Sigmoid colon (tissue), 7 donors: ENCODE measurements at regions of chr16 and their contacts with region 1.

Region 1: GRCh38 chr16:15553313-15554088 is 89.5 kb downstream of the MARF1 start:
- DNase-seq: no peak
- H3K4me3 ChIP-seq: no peak overlapping the region
- H3K27ac ChIP-seq: no peak overlapping the region
- H3K4me1 ChIP-seq: peaks cover 0 to 10% (median 0%) of the 10 kb centered on the region in 4 donors
- H3K27me3 ChIP-seq: no peaks in the 10 kb centered on the region
- CTCF ChIP-seq: no peak
- EP300 ChIP-seq: no peak
- POLR2A ChIP-seq: no peak

Region 2: GRCh38 chr16:15427648-15428239 is 125.8 kb before region 1 on chr16:
- intact Hi-C with region 1: loop called (anchors 5 kb)
- DNase-seq: peak; percentile 83
- H3K4me3 ChIP-seq: peak overlapping the region in 1 of 4 donors; percentile 20
- H3K27ac ChIP-seq: peak overlapping the region; percentile 42 to 66 (median 55)
- H3K4me1 ChIP-seq: peaks cover 0 to 12% (median 11%) of the 10 kb centered on the region in 4 donors
- H3K27me3 ChIP-seq: no peaks in the 10 kb centered on the region
- CTCF ChIP-seq: peak; percentile 46 to 62 (median 60)
- EP300 ChIP-seq: no peak
- POLR2A ChIP-seq: no peak